ENCODE measurements at regions of chr11 and their contacts with region 1.

Region 1: GRCh38 chr11:29173660-29174062 is 843.2 kb downstream of the KCNA4 start:
- DNase-seq: peak in 1 of 2 experiments; percentile 45
- H3K4me3 ChIP-seq: no peak overlapping the region
- H3K27ac ChIP-seq: no peak overlapping the region
- H3K4me1 ChIP-seq: no peaks in the 10 kb centered on the region
- H3K27me3 ChIP-seq: no peaks in the 10 kb centered on the region
- CTCF ChIP-seq: no peak

Region 2: GRCh38 chr11:29075726-29076125 is 97.9 kb before region 1 on chr11:
- CTCF ChIA-PET with region 1: no interaction called
- POLR2A ChIA-PET with region 1: no interaction called
- intact Hi-C with region 1: no loop called
- DNase-seq: no peak
- H3K4me3 ChIP-seq: no peak overlapping the region
- H3K27ac ChIP-seq: no peak overlapping the region
- H3K4me1 ChIP-seq: no peaks in the 10 kb centered on the region
- H3K27me3 ChIP-seq: no peaks in the 10 kb centered on the region
- CTCF ChIP-seq: no peak

Region 3: GRCh38 chr11:29243616-29244015 is 70.0 kb after region 1 on chr11:
- CTCF ChIA-PET with region 1: no interaction called
- POLR2A ChIA-PET with region 1: no interaction called
- intact Hi-C with region 1: no loop called
- DNase-seq: no peak
- H3K4me3 ChIP-seq: no peak overlapping the region
- H3K27ac ChIP-seq: no peak overlapping the region
- H3K4me1 ChIP-seq: no peaks in the 10 kb centered on the region
- H3K27me3 ChIP-seq: no peaks in the 10 kb centered on the region
- CTCF ChIP-seq: no peak

Region 4: DNA sequence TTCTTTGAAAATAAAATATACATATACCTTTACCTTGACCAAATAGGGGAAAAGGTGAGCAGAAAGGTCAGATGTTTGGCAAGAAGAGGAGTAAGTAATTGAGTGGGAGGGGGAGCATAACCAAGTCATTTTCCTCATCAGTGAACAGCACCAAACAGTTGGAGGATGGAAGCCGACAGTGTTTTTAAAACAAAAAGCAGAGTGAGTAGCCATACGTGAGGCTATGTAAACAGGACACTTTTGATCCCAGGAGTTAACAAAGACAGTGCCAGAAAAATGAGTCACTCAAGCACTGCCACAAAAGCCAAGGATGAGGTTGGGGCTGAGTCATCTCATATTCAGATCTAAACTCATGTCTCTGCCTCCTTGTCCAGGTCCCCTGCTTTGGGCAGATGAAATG is 108.4 kb after region 1 on chr11:
- CTCF ChIA-PET with region 1: no interaction called
- POLR2A ChIA-PET with region 1: no interaction called
- intact Hi-C with region 1: loop called (anchors 10 kb)
- DNase-seq: peak; percentile 42 to 61
- H3K4me3 ChIP-seq: no peak overlapping the region
- H3K27ac ChIP-seq: no peak overlapping the region
- H3K4me1 ChIP-seq: 0 out of 2 replicates have a peak, but pooled peaks cover 5% of the 10 kb centered on the region
- H3K27me3 ChIP-seq: no peaks in the 10 kb centered on the region
- CTCF ChIP-seq: no peak

Measured in PC-9 (cell line).